Activated B cell treated with CpG ODN at 0.5 μM for 24 hours (primary cell): ENCODE measurements at regions of chr11 and their contacts with region 1.

Region 1: GRCh38 chr11:66694732-66695207 is 17.1 kb upstream of the RBM4B start:
- DNase-seq: peak; percentile 70
- ATAC-seq: peak; percentile 93
- H3K4me3 Mint-ChIP-seq: no peak overlapping the region
- H3K27ac Mint-ChIP-seq: no peak overlapping the region
- H3K4me1 Mint-ChIP-seq: peaks cover 5% of the 10 kb centered on the region
- H3K27me3 Mint-ChIP-seq: no peaks in the 10 kb centered on the region
- CTCF ChIP-seq: peak; percentile 79

Region 2: DNA sequence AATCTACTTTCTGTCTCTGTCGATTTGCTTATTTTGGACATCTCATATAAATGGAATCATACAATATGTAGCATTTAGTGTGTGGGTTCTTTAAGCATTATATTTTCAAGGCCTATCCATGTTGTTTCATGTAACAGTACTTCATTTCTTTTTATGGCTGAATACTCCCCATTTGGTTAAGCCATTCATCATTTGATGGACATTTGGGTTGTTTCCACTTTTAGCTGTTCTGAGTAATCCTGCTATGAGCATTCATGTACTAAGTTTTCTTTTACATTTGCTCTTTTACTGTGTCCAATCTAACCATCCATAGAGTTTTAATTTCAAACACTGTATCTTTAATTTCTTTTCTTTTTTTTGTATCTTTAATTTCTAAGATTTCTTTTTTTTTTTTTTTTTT is 89.8 kb after region 1 on chr11:
- CTCF ChIA-PET with region 1: no interaction called
- POLR2A ChIA-PET with region 1: no interaction called
- intact Hi-C with region 1: no loop called
- DNase-seq: no peak
- ATAC-seq: no peak
- H3K4me3 Mint-ChIP-seq: no peak overlapping the region
- H3K27ac Mint-ChIP-seq: no peak overlapping the region
- H3K4me1 Mint-ChIP-seq: no peaks in the 10 kb centered on the region
- H3K27me3 Mint-ChIP-seq: no peaks in the 10 kb centered on the region
- CTCF ChIP-seq: no peak

Region 3: GRCh38 chr11:66835768-66836405 is 141.1 kb after region 1 on chr11:
- CTCF ChIA-PET with region 1: interaction called, 61 read pairs
- POLR2A ChIA-PET with region 1: interaction called, 4 read pairs
- intact Hi-C with region 1: loop called (anchors 1 kb)
- DNase-seq: no peak
- ATAC-seq: no peak
- H3K4me3 Mint-ChIP-seq: no peak overlapping the region
- H3K27ac Mint-ChIP-seq: peak overlapping the region; percentile 5
- H3K4me1 Mint-ChIP-seq: peaks cover 31% of the 10 kb centered on the region
- H3K27me3 Mint-ChIP-seq: no peaks in the 10 kb centered on the region
- CTCF ChIP-seq: no peak

Region 4: DNA sequence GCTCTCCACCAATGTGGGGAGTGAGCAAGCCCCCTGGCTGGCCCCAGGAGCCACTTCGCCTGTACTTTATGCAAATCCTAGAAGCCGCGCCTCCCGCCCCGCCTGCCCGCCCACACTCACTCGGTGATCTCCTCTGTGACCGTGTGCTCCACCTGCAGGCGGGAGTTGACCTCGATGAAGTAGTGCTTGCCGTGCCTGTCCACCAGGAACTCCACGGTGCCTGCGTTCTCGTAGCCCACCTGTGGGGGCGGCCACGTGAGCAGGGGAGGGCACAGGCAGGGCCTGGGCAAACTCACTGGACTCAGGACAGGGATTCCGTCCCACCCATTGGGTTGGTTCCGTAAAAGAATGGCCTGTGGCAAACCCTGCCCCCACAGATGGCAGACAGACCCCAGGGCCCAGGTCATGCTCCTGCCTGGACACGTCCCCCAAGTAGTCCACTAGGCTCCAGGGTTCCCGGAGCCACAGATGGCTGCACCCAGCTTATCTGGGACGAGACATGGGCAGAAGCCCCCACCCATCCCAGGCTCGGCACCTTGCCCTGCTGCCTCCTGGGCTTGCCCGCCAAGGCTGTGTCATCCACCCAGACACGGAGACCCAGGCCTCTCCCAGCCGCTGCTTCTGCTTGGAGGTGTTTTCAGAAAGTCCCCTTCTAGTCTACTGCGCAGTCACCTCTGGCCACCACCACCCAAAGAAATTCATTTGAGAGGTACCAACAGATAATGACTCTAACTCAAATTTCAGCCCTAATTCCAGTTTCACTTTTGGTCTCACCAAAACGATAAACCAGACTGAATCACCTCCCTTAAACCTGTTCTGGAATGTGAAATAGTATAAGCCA is 174.2 kb after region 1 on chr11:
- CTCF ChIA-PET with region 1: no interaction called
- POLR2A ChIA-PET with region 1: no interaction called
- intact Hi-C with region 1: loop called (anchors 1 kb)
- DNase-seq: peak; percentile 70
- ATAC-seq: peak; percentile 99
- H3K4me3 Mint-ChIP-seq: no peak overlapping the region
- H3K27ac Mint-ChIP-seq: no peak overlapping the region
- H3K4me1 Mint-ChIP-seq: peaks cover 16% of the 10 kb centered on the region
- H3K27me3 Mint-ChIP-seq: no peaks in the 10 kb centered on the region
- CTCF ChIP-seq: no peak

Region 5: GRCh38 chr11:66883016-66883968 is 188.5 kb after region 1 on chr11:
- CTCF ChIA-PET with region 1: interaction called, 5 read pairs
- POLR2A ChIA-PET with region 1: interaction called, 3 read pairs
- intact Hi-C with region 1: loop called (anchors 1 kb)
- DNase-seq: peak; percentile 54
- ATAC-seq: peak; percentile 62
- H3K4me3 Mint-ChIP-seq: no peak overlapping the region
- H3K27ac Mint-ChIP-seq: no peak overlapping the region
- H3K4me1 Mint-ChIP-seq: no peaks in the 10 kb centered on the region
- H3K27me3 Mint-ChIP-seq: peaks cover 3% of the 10 kb centered on the region
- CTCF ChIP-seq: no peak